ENCODE measurements at regions of chr22 and their contacts with region 1.

Region 1: DNA sequence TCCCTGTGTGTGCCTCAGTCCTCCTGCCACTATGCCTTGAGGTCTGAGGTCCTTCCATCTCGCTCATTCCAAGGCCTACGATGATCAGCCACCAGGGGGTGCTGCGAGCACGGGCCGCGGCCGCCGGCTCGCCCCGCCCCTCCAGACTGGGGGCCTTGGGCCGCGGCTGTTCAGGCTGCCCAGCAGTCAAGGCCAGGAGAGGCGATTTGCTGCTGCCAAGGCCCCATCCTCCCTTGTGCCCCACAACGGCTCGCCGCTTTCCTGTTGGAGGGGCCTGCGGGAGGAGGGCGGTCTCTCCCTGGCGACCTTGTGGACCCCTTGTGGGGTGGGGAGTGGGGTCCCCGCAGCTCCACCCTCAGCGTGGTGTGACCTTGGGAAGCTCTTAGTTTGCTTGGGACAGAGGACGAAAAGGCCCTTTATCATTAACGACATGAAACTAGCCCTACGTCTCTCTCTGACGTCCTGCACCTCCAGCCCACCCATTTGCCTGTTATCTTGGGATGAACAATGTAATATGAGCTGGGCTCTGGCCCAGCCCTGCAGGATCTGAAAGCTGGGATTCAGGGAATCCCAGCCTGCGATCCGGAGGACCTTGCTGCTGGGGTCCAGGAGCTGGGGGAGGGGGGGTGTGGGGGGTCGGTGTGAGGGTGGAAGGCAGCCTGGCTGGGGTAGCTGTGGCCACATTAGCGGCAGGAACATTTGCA is 5.3 kb upstream of the GALR3 start:
- DNase-seq: peak; percentile 81
- ATAC-seq: peak; percentile 83
- H3K4me3 Mint-ChIP-seq: peak overlapping the region; percentile 18
- H3K27ac Mint-ChIP-seq: no peak overlapping the region
- H3K4me1 Mint-ChIP-seq: peaks cover 17% of the 10 kb centered on the region
- H3K27me3 Mint-ChIP-seq: peaks cover 25% of the 10 kb centered on the region

Region 2: DNA sequence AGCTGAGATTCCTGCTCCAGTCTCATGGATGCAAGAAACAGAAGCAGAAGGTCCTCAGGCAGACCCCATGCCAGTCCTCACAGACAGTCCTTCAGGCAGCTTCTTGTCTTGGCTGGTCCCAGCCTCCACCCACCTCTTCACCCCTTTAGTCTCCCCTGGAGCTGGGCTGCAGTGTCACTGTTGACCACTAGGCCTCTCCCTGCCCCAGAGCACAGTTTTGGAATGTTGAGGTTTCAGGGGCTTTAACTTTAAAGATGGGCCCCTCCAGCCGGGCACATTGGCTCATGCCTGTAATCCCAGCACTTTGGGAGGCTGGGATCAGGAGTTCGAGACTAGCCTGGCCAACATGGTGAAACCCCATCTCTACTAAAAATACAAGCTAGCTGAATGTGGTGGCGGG is 49.6 kb before region 1 on chr22:
- CTCF ChIA-PET with region 1: no interaction called
- POLR2A ChIA-PET with region 1: no interaction called
- DNase-seq: no peak
- ATAC-seq: peak; percentile 44
- H3K4me3 Mint-ChIP-seq: no peak overlapping the region
- H3K27ac Mint-ChIP-seq: no peak overlapping the region
- H3K4me1 Mint-ChIP-seq: no peaks in the 10 kb centered on the region
- H3K27me3 Mint-ChIP-seq: no peaks in the 10 kb centered on the region

Region 3: DNA sequence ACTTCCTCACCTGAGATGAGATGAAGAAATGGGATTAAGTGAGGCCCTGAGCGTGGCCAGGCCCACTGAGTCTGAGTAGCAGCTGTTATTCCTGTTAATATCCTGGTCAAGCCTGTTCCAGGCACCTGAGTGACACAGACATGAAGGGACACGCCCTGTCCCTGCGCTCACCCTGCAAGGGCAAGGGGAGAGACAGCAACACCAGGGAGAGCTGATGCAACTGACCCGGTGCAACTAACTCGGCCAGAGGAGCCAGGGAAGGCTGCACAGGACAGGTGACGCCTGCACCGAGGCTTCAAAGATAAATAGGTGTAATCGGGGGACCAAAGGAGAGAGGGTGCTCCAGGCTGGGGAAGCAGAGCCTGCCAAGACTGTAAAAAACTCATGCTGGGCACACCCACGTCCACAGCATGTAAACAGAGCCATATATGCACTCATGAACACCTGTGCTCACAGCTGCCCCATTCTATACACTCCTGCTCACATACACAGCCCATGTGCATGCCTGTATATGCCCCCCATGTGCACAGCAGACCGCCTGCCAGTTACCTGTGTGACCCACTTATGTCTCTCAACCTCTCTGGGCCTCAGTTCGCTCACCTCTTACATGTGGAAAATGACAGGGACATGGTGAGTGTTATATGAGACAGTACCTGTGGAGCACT is 32.9 kb before region 1 on chr22:
- CTCF ChIA-PET with region 1: no interaction called
- POLR2A ChIA-PET with region 1: no interaction called
- DNase-seq: no peak
- ATAC-seq: no peak
- H3K4me3 Mint-ChIP-seq: no peak overlapping the region
- H3K27ac Mint-ChIP-seq: no peak overlapping the region
- H3K4me1 Mint-ChIP-seq: no peaks in the 10 kb centered on the region
- H3K27me3 Mint-ChIP-seq: no peaks in the 10 kb centered on the region

Region 4: DNA sequence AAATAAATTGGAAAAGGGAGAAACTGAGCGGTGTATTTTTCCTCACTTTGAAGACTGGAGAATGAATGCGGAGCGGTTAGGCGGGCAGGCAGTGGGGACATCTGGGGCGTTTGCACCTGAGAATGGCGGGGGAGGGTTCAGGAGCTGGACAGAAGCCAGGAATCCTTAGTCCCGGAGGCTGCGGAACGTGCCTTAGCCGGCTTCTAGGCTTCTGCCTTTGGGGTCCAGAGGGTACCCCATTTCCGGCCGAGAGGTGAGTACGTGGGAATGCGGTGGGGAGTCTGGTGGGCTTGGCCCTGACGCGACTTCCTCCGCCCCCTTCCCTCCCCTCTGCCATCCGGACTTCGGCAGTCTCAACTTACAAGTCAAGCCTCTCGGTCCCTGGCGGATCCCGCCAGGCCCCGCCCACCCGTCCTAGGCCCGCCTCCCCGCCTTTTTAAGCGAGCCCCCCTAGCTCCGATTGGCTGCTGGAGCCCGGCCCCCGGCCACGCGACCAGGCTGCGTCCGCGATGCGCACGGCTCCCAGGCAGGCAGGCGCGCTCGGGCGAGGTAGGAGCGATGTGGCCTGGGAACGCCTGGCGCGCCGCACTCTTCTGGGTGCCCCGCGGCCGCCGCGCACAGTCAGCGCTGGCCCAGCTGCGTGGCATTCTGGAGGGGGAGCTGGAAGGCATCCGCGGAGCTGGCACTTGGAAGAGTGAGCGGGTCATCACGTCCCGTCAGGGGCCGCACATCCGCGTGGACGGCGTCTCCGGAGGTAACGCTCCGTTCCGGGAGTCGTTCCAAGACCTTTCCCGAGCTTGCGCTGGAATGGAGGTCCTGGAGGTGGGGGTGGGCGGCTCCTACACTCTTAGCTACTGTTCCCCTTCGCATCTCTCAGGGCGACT is 10.2 kb before region 1 on chr22 and contains the start of gene GCAT:
- CTCF ChIA-PET with region 1: interaction called, 56 read pairs
- POLR2A ChIA-PET with region 1: interaction called, 6 read pairs
- DNase-seq: peak; percentile 96
- ATAC-seq: peak; percentile 98
- H3K4me3 Mint-ChIP-seq: peak within 1 kb of the TSS; percentile 80
- H3K27ac Mint-ChIP-seq: peak within 1 kb of the TSS; percentile 43
- H3K4me1 Mint-ChIP-seq: peaks cover 54% of the 10 kb centered on the region
- H3K27me3 Mint-ChIP-seq: peaks cover 38% of the 10 kb centered on the region
- total RNA-seq, gene GCAT: 14.3 to 18.3 TPM

Region 5: DNA sequence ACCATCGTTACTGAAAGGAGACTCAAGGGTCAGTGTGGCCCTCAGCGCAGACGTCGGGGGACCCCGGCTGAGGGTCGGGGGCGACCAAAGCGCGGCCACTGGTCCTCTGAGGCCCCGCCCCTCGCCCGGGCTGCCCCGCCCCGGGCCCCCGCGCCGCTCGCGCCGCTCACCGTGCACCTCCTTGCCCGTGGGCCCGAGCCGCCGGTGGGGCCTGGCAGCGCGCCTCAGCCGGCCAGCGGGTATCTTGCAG is 25.8 kb after region 1 on chr22:
- CTCF ChIA-PET with region 1: interaction called, 29 read pairs
- POLR2A ChIA-PET with region 1: interaction called, 7 read pairs
- DNase-seq: peak; percentile 62
- ATAC-seq: peak; percentile 52
- H3K4me3 Mint-ChIP-seq: peak overlapping the region; percentile 84
- H3K27ac Mint-ChIP-seq: peak overlapping the region; percentile 87
- H3K4me1 Mint-ChIP-seq: peaks cover 30% of the 10 kb centered on the region
- H3K27me3 Mint-ChIP-seq: no peaks in the 10 kb centered on the region

Region 6: DNA sequence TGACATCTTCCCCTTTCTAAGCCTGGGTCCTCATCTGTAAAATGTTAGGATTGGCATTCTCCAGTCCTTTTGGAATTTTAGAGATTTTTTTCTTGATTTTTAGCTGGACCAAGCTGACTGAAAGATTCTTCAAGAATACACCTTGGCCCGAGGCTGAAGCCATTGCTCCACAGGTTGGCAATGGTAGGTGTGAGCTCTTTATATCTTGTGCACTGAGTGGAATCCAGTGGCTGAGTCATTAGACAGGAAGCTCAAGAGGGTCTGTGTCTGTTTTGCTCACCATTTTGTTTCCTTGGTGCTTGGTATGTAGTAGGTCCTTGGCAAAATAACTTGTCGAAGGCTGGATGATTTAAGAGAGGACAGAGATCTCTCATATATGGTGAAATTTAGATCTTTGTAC is 37.6 kb after region 1 on chr22:
- CTCF ChIA-PET with region 1: interaction called, 10 read pairs
- POLR2A ChIA-PET with region 1: no interaction called
- DNase-seq: no peak
- ATAC-seq: no peak
- H3K4me3 Mint-ChIP-seq: no peak overlapping the region
- H3K27ac Mint-ChIP-seq: no peak overlapping the region
- H3K4me1 Mint-ChIP-seq: peaks cover 31% of the 10 kb centered on the region
- H3K27me3 Mint-ChIP-seq: no peaks in the 10 kb centered on the region

Region 7: DNA sequence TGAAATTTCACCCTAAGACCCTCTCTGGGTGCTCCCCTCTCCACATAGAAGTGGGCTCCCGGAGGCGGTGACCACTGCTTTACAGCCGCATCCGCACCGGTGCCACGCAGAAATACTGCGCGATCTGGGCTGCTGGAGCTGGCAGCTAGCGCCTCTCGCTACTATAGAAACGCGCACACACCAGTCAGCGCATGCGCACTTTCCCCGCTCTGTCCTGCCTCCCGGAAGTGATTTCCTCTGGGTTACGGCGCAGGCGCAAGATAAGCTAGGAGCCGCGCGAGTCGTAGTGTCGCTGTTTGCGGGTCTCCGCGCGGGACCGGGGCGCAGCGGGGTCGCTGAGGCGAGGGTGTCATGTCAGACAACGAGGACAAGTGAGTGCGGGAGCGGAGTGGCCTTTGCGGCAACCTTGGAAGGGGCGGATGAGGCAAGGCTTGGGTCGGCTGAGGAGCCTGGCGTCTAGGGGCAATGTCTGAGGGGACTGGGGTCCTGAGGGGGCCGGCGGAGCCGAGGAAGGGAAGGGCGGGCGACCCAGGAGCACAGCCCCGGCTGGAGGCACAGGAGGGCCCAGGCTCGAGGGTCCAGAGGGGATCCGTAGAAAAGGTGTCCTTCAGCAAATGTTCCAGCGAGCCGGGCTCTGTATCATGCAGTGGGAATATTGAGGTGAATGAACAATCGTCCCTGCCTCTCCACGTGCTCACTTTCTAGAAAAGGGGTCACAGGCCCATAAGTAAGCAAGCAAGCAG is 135.8 kb after region 1 on chr22 and contains the starts of genes C22orf23 and POLR2F:
- CTCF ChIA-PET with region 1: interaction called, 12 read pairs
- POLR2A ChIA-PET with region 1: no interaction called
- DNase-seq: peak; percentile 98
- ATAC-seq: peak; percentile 94
- H3K4me3 Mint-ChIP-seq: peak within 1 kb of the TSS; percentile 99
- H3K27ac Mint-ChIP-seq: peak within 1 kb of the TSS; percentile 96
- H3K4me1 Mint-ChIP-seq: peaks cover 23% of the 10 kb centered on the region
- H3K27me3 Mint-ChIP-seq: peaks cover 14% of the 10 kb centered on the region
- total RNA-seq, gene C22orf23: not detected
- total RNA-seq, gene POLR2F: 71.7 to 73.8 TPM

Region 8: GRCh38 chr22:37959231-37959825 is 141.5 kb after region 1 on chr22:
- CTCF ChIA-PET with region 1: interaction called, 38 read pairs
- POLR2A ChIA-PET with region 1: no interaction called
- DNase-seq: no peak
- ATAC-seq: no peak
- H3K4me3 Mint-ChIP-seq: no peak overlapping the region
- H3K27ac Mint-ChIP-seq: no peak overlapping the region
- H3K4me1 Mint-ChIP-seq: peaks cover 8% of the 10 kb centered on the region
- H3K27me3 Mint-ChIP-seq: no peaks in the 10 kb centered on the region

Region 9: GRCh38 chr22:37965940-37966664 is 148.2 kb after region 1 on chr22:
- CTCF ChIA-PET with region 1: interaction called, 38 read pairs
- POLR2A ChIA-PET with region 1: interaction called, 3 read pairs
- DNase-seq: no peak
- ATAC-seq: no peak
- H3K4me3 Mint-ChIP-seq: no peak overlapping the region
- H3K27ac Mint-ChIP-seq: no peak overlapping the region
- H3K4me1 Mint-ChIP-seq: peaks cover 4% of the 10 kb centered on the region
- H3K27me3 Mint-ChIP-seq: no peaks in the 10 kb centered on the region